CD8-positive, alpha-beta T cell (primary cell): ENCODE measurements at regions of chr14 and their contacts with region 1.

Region 1: DNA sequence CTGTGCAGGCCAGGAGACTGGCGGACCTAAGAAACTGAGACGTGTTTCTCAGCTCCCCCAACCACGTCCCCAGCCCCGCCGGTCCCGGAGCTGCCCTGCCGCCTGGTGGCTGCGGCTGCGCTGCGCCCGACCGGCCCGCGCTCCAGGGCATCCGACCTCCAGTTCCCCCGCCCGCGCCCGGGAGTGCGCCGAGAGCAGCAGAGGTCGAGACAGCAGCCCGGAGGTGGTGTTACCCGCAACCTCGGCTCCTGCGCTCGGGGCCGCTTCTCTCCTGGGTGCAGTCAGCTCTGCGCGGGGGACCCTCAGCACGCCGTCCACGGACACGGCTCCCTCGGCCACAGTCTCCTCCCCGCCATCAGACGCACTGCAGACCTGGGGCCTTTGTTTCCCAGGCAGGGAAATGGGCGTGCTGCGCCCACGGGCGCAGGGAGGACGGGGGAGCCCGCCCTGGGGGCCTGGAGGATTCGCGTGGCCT is 21.6 kb upstream of the GPR132 start:
- DNase-seq: peak; percentile 71 to 96 (median 87)
- ATAC-seq: peak; percentile 87
- H3K4me3 ChIP-seq: peak overlapping the region; percentile 59 to 65
- H3K4me3 Mint-ChIP-seq: peak overlapping the region; percentile 78
- H3K27ac ChIP-seq: peak overlapping the region in 1 of 2 experiments; percentile 43
- H3K27ac Mint-ChIP-seq: peak overlapping the region; percentile 77
- H3K4me1 ChIP-seq: peaks cover 36% of the 10 kb centered on the region
- H3K4me1 Mint-ChIP-seq: peaks cover 9% of the 10 kb centered on the region
- H3K27me3 ChIP-seq: no peaks in the 10 kb centered on the region
- H3K27me3 Mint-ChIP-seq: no peaks in the 10 kb centered on the region
- CTCF ChIP-seq: peak; percentile 83

Region 2: GRCh38 chr14:105020815-105021655 is 65.8 kb before region 1 on chr14 and contains the start of gene CDCA4:
- CTCF ChIA-PET with region 1: interaction called, 5 read pairs
- POLR2A ChIA-PET with region 1: interaction called, 3 read pairs
- intact Hi-C with region 1: loop called (anchors 1 to 2 kb)
- DNase-seq: peak; percentile 97 to 99 (median 98)
- ATAC-seq: peak; percentile 82
- H3K4me3 ChIP-seq: peak within 1 kb of the TSS; percentile 58 to 87
- H3K4me3 Mint-ChIP-seq: peak within 1 kb of the TSS; percentile 89
- H3K27ac ChIP-seq: peak within 1 kb of the TSS; percentile 78 to 81
- H3K27ac Mint-ChIP-seq: peak within 1 kb of the TSS; percentile 96
- H3K4me1 ChIP-seq: peaks cover 23% of the 10 kb centered on the region
- H3K4me1 Mint-ChIP-seq: peaks cover 53% of the 10 kb centered on the region
- H3K27me3 ChIP-seq: no peaks in the 10 kb centered on the region
- H3K27me3 Mint-ChIP-seq: no peaks in the 10 kb centered on the region
- CTCF ChIP-seq: no peak
- total RNA-seq, gene CDCA4: 20.2 to 22.9 TPM

Region 3: DNA sequence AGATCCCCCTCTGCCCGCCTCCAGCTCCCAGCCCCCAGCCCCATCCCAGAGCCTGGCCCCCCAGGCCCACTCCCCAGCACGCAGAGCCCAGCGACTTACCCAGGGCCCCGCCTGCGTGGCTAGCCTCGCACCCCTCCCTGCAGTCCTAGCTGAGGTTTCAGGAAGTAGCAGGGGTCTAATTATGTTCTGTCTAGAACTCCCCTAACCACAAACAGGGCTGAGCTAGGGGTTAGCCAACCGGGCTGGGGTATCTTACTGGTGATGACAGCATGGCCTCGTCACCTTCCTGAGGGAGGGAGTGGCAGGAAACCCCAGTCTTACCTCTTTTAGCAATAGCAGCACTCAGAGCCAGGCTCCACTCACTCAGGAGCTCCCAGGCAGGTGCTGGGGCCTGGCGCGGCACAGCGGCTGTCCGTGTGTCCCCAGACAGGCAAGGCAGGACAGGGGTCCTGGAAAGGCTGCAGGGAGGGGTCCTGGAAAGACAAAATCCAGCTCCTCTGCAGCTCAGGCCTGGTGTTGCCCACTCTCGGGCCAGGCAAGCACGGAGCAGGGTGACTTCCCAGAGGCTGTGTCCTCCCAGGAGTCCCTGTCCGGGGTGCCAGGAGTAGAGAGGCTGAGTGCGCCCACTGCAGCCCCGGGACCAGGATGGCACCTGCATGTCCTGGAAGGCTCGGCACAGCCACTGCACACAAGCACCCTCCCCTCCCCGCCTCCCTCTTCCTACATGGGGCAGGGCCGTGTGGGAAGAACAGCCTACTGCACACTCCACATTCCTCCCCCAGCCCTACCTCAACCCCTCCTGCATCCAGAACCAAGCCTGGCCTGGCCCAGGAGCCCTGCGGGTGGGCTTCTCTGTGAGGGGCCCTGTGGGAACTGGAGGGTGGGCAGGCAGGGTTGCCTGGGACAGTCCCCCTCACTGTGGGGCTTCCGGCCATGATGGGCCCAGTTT is 21.3 kb before region 1 on chr14 and contains the start of gene GPR132:
- CTCF ChIA-PET with region 1: interaction called, 213 read pairs
- POLR2A ChIA-PET with region 1: interaction called, 43 read pairs
- intact Hi-C with region 1: loop called (anchors 1 to 2 kb)
- DNase-seq: peak; percentile 79 to 99 (median 89)
- ATAC-seq: peak; percentile 87
- H3K4me3 ChIP-seq: peak within 1 kb of the TSS; percentile 90 to 92
- H3K4me3 Mint-ChIP-seq: peak within 1 kb of the TSS; percentile 94
- H3K27ac ChIP-seq: peak within 1 kb of the TSS; percentile 97 to 98
- H3K27ac Mint-ChIP-seq: peak within 1 kb of the TSS; percentile 98
- H3K4me1 ChIP-seq: peaks cover 88% of the 10 kb centered on the region
- H3K4me1 Mint-ChIP-seq: peaks cover 75% of the 10 kb centered on the region
- H3K27me3 ChIP-seq: no peaks in the 10 kb centered on the region
- H3K27me3 Mint-ChIP-seq: no peaks in the 10 kb centered on the region
- CTCF ChIP-seq: no peak
- total RNA-seq, gene GPR132: 91.8 to 101 TPM

Region 4: GRCh38 chr14:105180592-105181548 is 94.0 kb after region 1 on chr14 and contains the start of gene NUDT14:
- CTCF ChIA-PET with region 1: no interaction called
- POLR2A ChIA-PET with region 1: no interaction called
- intact Hi-C with region 1: loop called (anchors 5 kb)
- DNase-seq: peak; percentile 77 to 95 (median 86)
- ATAC-seq: peak; percentile 94
- H3K4me3 ChIP-seq: peak within 1 kb of the TSS; percentile 36 to 37
- H3K4me3 Mint-ChIP-seq: peak within 1 kb of the TSS; percentile 76
- H3K27ac ChIP-seq: no peak within 1 kb of the TSS
- H3K27ac Mint-ChIP-seq: no peak within 1 kb of the TSS
- H3K4me1 ChIP-seq: peaks cover 25% of the 10 kb centered on the region
- H3K4me1 Mint-ChIP-seq: peaks cover 16% of the 10 kb centered on the region
- H3K27me3 ChIP-seq: no peaks in the 10 kb centered on the region
- H3K27me3 Mint-ChIP-seq: no peaks in the 10 kb centered on the region
- CTCF ChIP-seq: no peak
- total RNA-seq, gene NUDT14: 5.7 to 6.2 TPM

Region 5: GRCh38 chr14:105223260-105223659 is 136.4 kb after region 1 on chr14:
- CTCF ChIA-PET with region 1: no interaction called
- POLR2A ChIA-PET with region 1: no interaction called
- intact Hi-C with region 1: no loop called
- DNase-seq: no peak
- ATAC-seq: no peak
- H3K4me3 ChIP-seq: no peak overlapping the region
- H3K4me3 Mint-ChIP-seq: no peak overlapping the region
- H3K27ac ChIP-seq: no peak overlapping the region
- H3K27ac Mint-ChIP-seq: no peak overlapping the region
- H3K4me1 ChIP-seq: no peaks in the 10 kb centered on the region
- H3K4me1 Mint-ChIP-seq: no peaks in the 10 kb centered on the region
- H3K27me3 ChIP-seq: no peaks in the 10 kb centered on the region
- H3K27me3 Mint-ChIP-seq: no peaks in the 10 kb centered on the region
- CTCF ChIP-seq: no peak

Region 6: GRCh38 chr14:105340821-105341733 is 254.2 kb after region 1 on chr14:
- CTCF ChIA-PET with region 1: interaction called, 10 read pairs
- POLR2A ChIA-PET with region 1: no interaction called
- intact Hi-C with region 1: no loop called
- DNase-seq: no peak
- ATAC-seq: no peak
- H3K4me3 ChIP-seq: no peak overlapping the region
- H3K4me3 Mint-ChIP-seq: no peak overlapping the region
- H3K27ac ChIP-seq: no peak overlapping the region
- H3K27ac Mint-ChIP-seq: no peak overlapping the region
- H3K4me1 ChIP-seq: peaks cover 6% of the 10 kb centered on the region
- H3K4me1 Mint-ChIP-seq: peaks cover 9% of the 10 kb centered on the region
- H3K27me3 ChIP-seq: no peaks in the 10 kb centered on the region
- H3K27me3 Mint-ChIP-seq: no peaks in the 10 kb centered on the region
- CTCF ChIP-seq: no peak

Region 7: GRCh38 chr14:105490572-105491366 is 403.9 kb after region 1 on chr14 and contains the start of gene TEDC1:
- CTCF ChIA-PET with region 1: no interaction called
- POLR2A ChIA-PET with region 1: interaction called, 4 read pairs
- intact Hi-C with region 1: loop called in 1 of 2 experiments (anchors 5 kb)
- DNase-seq: peak; percentile 98 to 100 (median 99)
- ATAC-seq: peak; percentile 67
- H3K4me3 ChIP-seq: peak within 1 kb of the TSS; percentile 59 to 84
- H3K4me3 Mint-ChIP-seq: peak within 1 kb of the TSS; percentile 84
- H3K27ac ChIP-seq: peak within 1 kb of the TSS; percentile 95 to 96
- H3K27ac Mint-ChIP-seq: peak within 1 kb of the TSS; percentile 96
- H3K4me1 ChIP-seq: peaks cover 39% of the 10 kb centered on the region
- H3K4me1 Mint-ChIP-seq: peaks cover 27% of the 10 kb centered on the region
- H3K27me3 ChIP-seq: no peaks in the 10 kb centered on the region
- H3K27me3 Mint-ChIP-seq: no peaks in the 10 kb centered on the region
- CTCF ChIP-seq: peak; percentile 84
- total RNA-seq, gene TEDC1: 55.3 to 58.5 TPM